ENCODE measurements at regions of chr3 and their contacts with region 1.

Region 1: GRCh38 chr3:141498598-141499223 is 11.9 kb downstream of the RASA2 start:
- DNase-seq: peak; percentile 97
- H3K4me3 Mint-ChIP-seq: peak overlapping the region; percentile 70
- H3K27ac Mint-ChIP-seq: peak overlapping the region; percentile 93
- H3K4me1 Mint-ChIP-seq: peaks cover 51% of the 10 kb centered on the region
- H3K27me3 Mint-ChIP-seq: no peaks in the 10 kb centered on the region

Region 2: GRCh38 chr3:141412087-141412935 is 86.4 kb before region 1 on chr3:
- intact Hi-C with region 1: no loop called
- DNase-seq: peak; percentile 88
- H3K4me3 Mint-ChIP-seq: peak overlapping the region; percentile 83
- H3K27ac Mint-ChIP-seq: peak overlapping the region; percentile 99
- H3K4me1 Mint-ChIP-seq: peaks cover 48% of the 10 kb centered on the region
- H3K27me3 Mint-ChIP-seq: no peaks in the 10 kb centered on the region

Region 3: GRCh38 chr3:141460097-141460704 is 38.5 kb before region 1 on chr3:
- intact Hi-C with region 1: loop called (anchors 1 kb)
- DNase-seq: peak; percentile 96
- H3K4me3 Mint-ChIP-seq: no peak overlapping the region
- H3K27ac Mint-ChIP-seq: no peak overlapping the region
- H3K4me1 Mint-ChIP-seq: peaks cover 19% of the 10 kb centered on the region
- H3K27me3 Mint-ChIP-seq: peaks cover 1% of the 10 kb centered on the region

Region 4: GRCh38 chr3:141487521-141488252 is 11.0 kb before region 1 on chr3:
- intact Hi-C with region 1: loop called (anchors 1 kb)
- DNase-seq: peak; percentile 96
- H3K4me3 Mint-ChIP-seq: peak overlapping the region; percentile 92
- H3K27ac Mint-ChIP-seq: peak overlapping the region; percentile 92
- H3K4me1 Mint-ChIP-seq: peaks cover 58% of the 10 kb centered on the region
- H3K27me3 Mint-ChIP-seq: peaks cover 2% of the 10 kb centered on the region

Region 5: GRCh38 chr3:141530133-141530768 is 31.5 kb after region 1 on chr3:
- intact Hi-C with region 1: loop called (anchors 1 kb)
- DNase-seq: no peak
- H3K4me3 Mint-ChIP-seq: peak overlapping the region; percentile 18
- H3K27ac Mint-ChIP-seq: peak overlapping the region; percentile 61
- H3K4me1 Mint-ChIP-seq: peaks cover 37% of the 10 kb centered on the region
- H3K27me3 Mint-ChIP-seq: no peaks in the 10 kb centered on the region

Region 6: DNA sequence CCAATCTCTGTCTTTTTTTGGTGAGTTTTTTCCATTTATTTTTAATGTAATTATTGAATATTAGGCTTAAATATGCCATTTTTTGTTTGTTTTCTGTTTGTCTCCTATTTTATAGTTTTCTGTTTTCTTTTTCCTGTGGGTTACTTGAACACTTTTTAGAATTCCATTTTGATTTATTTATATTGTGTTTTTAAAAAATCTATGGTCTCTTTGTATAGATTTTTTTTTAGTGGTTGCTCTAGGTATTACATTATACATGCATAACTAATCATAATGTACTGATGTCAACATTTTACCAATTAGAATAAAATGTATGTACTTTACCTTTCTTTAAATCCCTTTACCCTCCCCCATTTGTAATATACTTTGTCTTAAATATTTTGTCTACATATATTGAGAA is 44.3 kb after region 1 on chr3:
- intact Hi-C with region 1: loop called (anchors 1 kb)
- DNase-seq: no peak
- H3K4me3 Mint-ChIP-seq: no peak overlapping the region
- H3K27ac Mint-ChIP-seq: peak overlapping the region; percentile 54
- H3K4me1 Mint-ChIP-seq: peaks cover 31% of the 10 kb centered on the region
- H3K27me3 Mint-ChIP-seq: no peaks in the 10 kb centered on the region

Region 7: GRCh38 chr3:141553055-141553454 is 54.3 kb after region 1 on chr3:
- intact Hi-C with region 1: loop called (anchors 1 kb)
- DNase-seq: peak; percentile 81
- H3K4me3 Mint-ChIP-seq: peak overlapping the region; percentile 60
- H3K27ac Mint-ChIP-seq: peak overlapping the region; percentile 92
- H3K4me1 Mint-ChIP-seq: peaks cover 44% of the 10 kb centered on the region
- H3K27me3 Mint-ChIP-seq: no peaks in the 10 kb centered on the region

Region 8: DNA sequence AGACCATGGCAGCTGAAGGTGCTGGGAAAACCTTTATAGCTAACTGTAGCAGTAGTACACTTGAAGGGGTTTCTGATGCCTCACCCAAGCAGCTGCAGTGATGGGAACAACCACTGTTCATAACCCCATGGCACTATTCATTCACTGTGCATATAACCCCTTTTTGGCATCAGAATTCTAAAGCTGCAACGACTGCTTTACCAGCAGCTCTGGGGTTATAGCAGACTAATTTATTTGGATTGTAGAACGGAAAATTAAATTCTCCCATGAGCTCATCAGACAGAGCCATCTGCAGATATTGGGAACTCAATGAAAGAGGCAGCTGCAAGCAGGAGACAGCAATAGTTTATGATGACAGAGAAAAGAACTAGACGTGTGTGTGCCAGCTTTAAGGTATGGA is 622.0 kb after region 1 on chr3:
- intact Hi-C with region 1: no loop called
- DNase-seq: no peak
- H3K4me3 Mint-ChIP-seq: no peak overlapping the region
- H3K27ac Mint-ChIP-seq: no peak overlapping the region
- H3K4me1 Mint-ChIP-seq: no peaks in the 10 kb centered on the region
- H3K27me3 Mint-ChIP-seq: no peaks in the 10 kb centered on the region

Measured in activated CD4-positive, alpha-beta T cell treated with anti-CD3 and anti-CD28 coated beads, Interleukin-2, amount 10 ng/mL, durations not matched to agents 24 days and 14 days (primary cell).